Activated CD8-positive, alpha-beta T cell treated with anti-CD3 and anti-CD28 coated beads for 36 hours (primary cell): ENCODE measurements at regions of chr1 and their contacts with region 1.

Region 1: GRCh38 chr1:110097887-110098681 is 14.2 kb upstream of the UBL4B start:
- DNase-seq: no peak
- ATAC-seq: no peak
- H3K4me3 Mint-ChIP-seq: no peak overlapping the region
- H3K27ac Mint-ChIP-seq: no peak overlapping the region
- H3K4me1 Mint-ChIP-seq: no peaks in the 10 kb centered on the region
- H3K27me3 Mint-ChIP-seq: peaks cover 5% of the 10 kb centered on the region
- CTCF ChIP-seq: no peak

Region 2: GRCh38 chr1:110118636-110119615 is 20.8 kb after region 1 on chr1:
- CTCF ChIA-PET with region 1: interaction called, 58 read pairs
- POLR2A ChIA-PET with region 1: no interaction called
- intact Hi-C with region 1: no loop called
- DNase-seq: peak; percentile 66
- ATAC-seq: peak; percentile 89
- H3K4me3 Mint-ChIP-seq: no peak overlapping the region
- H3K27ac Mint-ChIP-seq: no peak overlapping the region
- H3K4me1 Mint-ChIP-seq: peaks cover 12% of the 10 kb centered on the region
- H3K27me3 Mint-ChIP-seq: peaks cover 8% of the 10 kb centered on the region
- CTCF ChIP-seq: no peak